Activated CD8-positive, alpha-beta T cell treated with anti-CD3 and anti-CD28 coated beads for 36 hours (primary cell): ENCODE measurements at regions of chr11 and their contacts with region 1.

Region 1: DNA sequence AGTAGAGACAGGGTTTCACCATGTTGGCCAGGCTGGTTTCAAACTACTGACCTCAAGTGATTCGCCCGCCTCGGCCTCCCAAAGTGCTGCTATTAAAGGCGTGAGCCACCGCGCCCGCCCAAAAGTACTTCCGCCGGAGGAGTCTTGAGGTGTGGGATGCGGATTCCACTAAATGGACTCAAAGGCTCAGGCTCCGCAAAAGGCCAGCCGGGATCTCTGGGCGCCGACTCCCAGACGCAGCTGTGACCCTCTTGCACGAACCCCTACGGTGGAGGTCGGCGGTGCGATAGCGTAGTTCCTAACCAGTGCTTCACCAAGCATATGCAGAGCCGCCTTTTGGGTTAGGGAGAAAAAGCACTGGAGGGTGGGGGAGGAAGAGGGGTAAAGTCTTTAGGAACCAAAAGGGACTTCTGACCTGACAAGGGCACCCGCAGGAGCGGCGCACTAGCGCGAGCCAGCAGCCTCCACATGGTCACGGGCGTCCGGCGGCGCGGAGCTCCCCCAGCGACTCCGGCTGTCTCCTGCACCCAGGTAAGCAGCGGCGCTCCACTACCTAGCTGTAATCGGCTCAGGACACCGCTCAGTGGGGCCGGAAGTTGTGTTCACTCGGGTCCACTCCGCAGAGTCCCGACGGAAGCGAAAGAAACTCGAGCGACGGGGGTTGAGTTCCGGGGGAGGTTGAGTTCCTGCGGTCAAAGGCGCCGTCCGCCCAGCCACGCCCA is at the start of gene MRPL16:
- DNase-seq: peak; percentile 92
- ATAC-seq: peak; percentile 98
- H3K4me3 Mint-ChIP-seq: peak within 1 kb of the TSS; percentile 92
- H3K27ac Mint-ChIP-seq: peak within 1 kb of the TSS; percentile 91
- H3K4me1 Mint-ChIP-seq: peaks cover 15% of the 10 kb centered on the region
- H3K27me3 Mint-ChIP-seq: no peaks in the 10 kb centered on the region
- CTCF ChIP-seq: no peak
- total RNA-seq, gene MRPL16: 76.4 to 78.7 TPM

Region 2: GRCh38 chr11:59753650-59754493 is 56.5 kb before region 1 on chr11:
- CTCF ChIA-PET with region 1: interaction called, 28 read pairs
- POLR2A ChIA-PET with region 1: interaction called, 14 read pairs
- intact Hi-C with region 1: no loop called
- DNase-seq: peak; percentile 92
- ATAC-seq: peak; percentile 71
- H3K4me3 Mint-ChIP-seq: peak overlapping the region; percentile 96
- H3K27ac Mint-ChIP-seq: peak overlapping the region; percentile 55
- H3K4me1 Mint-ChIP-seq: peaks cover 14% of the 10 kb centered on the region
- H3K27me3 Mint-ChIP-seq: peaks cover 8% of the 10 kb centered on the region
- CTCF ChIP-seq: peak; percentile 92

Region 3: DNA sequence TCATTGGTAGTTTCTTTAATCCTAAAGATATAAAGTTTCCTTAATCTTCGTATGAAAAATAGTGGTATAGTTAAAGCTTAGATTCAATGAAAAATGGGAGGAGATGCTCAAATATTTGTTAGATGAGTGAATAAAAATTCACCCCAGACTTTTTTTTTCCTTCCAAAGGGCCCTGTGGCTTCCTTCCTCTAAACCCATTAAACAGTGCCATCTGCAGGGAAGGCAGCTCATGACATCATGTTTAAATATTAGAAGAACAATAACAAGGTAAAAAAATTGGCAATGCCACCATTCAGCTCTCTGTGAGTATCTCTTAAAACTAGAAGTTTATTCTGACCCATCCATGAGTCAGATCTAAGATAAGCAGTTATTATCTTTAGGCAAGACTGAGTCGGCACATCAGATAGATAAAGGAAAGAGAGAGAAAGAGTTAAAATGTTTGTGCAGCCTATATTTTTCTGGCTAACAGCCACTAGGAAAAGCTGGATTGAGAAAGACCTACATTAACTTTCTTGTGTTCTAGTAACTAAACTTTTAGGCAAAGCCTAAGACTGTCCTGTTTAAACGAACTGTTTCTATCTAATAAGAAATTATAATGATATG is 108.7 kb after region 1 on chr11:
- CTCF ChIA-PET with region 1: interaction called, 10 read pairs
- POLR2A ChIA-PET with region 1: no interaction called
- intact Hi-C with region 1: no loop called
- DNase-seq: peak; percentile 58
- ATAC-seq: no peak
- H3K4me3 Mint-ChIP-seq: no peak overlapping the region
- H3K27ac Mint-ChIP-seq: no peak overlapping the region
- H3K4me1 Mint-ChIP-seq: no peaks in the 10 kb centered on the region
- H3K27me3 Mint-ChIP-seq: peaks cover 2% of the 10 kb centered on the region
- CTCF ChIP-seq: peak; percentile 49